ENCODE measurements at regions of chr20 and their contacts with region 1.

Region 1: GRCh38 chr20:24992487-24993205 is at the start of gene APMAP:
- DNase-seq: peak; percentile 77
- H3K4me3 ChIP-seq: peak within 1 kb of the TSS; percentile 87 to 93 (median 90)
- H3K27ac ChIP-seq: peak within 1 kb of the TSS; percentile 92 to 96 (median 96)
- H3K4me1 ChIP-seq: peaks cover 5 to 64% (median 24%) of the 10 kb centered on the region in 3 donors
- H3K27me3 ChIP-seq: no peaks in the 10 kb centered on the region
- CTCF ChIP-seq: peak in 2 of 6 experiments; percentile 9 to 10
- POLR2A ChIP-seq: peak in 3 of 4 donors; percentile 75 to 99 (median 95)
- total RNA-seq, gene APMAP: 16.7 to 38.4 (median 25.6) TPM

Region 2: GRCh38 chr20:24851346-24852019 is 141.2 kb before region 1 on chr20:
- intact Hi-C with region 1: no loop called
- DNase-seq: no peak
- H3K4me3 ChIP-seq: no peak overlapping the region
- H3K27ac ChIP-seq: no peak overlapping the region
- H3K4me1 ChIP-seq: no peaks in the 10 kb centered on the region
- H3K27me3 ChIP-seq: peaks cover 0 to 9% (median 0%) of the 10 kb centered on the region in 4 donors
- CTCF ChIP-seq: no peak
- POLR2A ChIP-seq: no peak

Region 3: DNA sequence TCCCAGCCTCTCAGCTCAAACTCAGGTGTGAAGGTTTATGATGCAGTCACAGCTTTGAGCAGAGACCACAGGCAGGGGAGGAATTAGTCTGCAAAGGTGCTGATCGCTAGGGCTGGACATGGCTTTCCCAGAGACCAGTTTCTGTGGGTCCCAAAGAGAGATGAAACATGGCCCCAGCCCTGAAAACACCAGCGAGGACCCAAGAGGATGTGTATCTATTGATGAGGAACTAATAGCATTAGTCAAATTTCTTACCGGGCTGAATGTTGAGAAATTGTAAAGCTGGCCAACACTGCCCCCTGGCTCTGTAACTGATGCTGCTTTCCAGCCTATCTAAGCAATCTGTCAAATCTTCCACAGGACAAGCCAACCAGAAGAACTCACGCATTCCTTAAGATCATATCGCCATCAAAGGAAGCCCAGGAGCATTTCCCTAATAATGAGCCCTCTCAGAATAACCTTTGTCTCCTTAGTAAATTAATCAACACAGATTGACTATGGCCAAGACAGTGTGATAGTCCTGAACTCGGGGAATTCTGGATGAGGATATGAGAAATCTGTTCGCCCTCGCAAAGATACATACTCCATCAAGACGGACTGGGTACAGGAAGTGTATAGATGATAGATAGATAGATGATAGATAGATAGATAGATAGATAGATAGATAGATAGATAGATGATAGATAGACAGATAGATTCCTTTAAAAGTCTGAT is 73.1 kb after region 1 on chr20:
- intact Hi-C with region 1: loop called (anchors 2 kb)
- DNase-seq: no peak
- H3K4me3 ChIP-seq: no peak overlapping the region
- H3K27ac ChIP-seq: no peak overlapping the region
- H3K4me1 ChIP-seq: peaks cover 0 to 16% (median 0%) of the 10 kb centered on the region in 3 donors
- H3K27me3 ChIP-seq: peaks cover 0 to 40% (median 0%) of the 10 kb centered on the region in 4 donors
- CTCF ChIP-seq: peak; percentile 76 to 88 (median 84)
- POLR2A ChIP-seq: no peak

Region 4: GRCh38 chr20:25178563-25179438 is 186.2 kb after region 1 on chr20:
- intact Hi-C with region 1: loop called (anchors 5 kb)
- DNase-seq: no peak
- H3K4me3 ChIP-seq: no peak overlapping the region
- H3K27ac ChIP-seq: peak overlapping the region in 3 of 4 donors; percentile 8 to 52 (median 47)
- H3K4me1 ChIP-seq: peaks cover 3 to 25% (median 12%) of the 10 kb centered on the region in 3 donors
- H3K27me3 ChIP-seq: no peaks in the 10 kb centered on the region
- CTCF ChIP-seq: peak; percentile 41 to 85 (median 64)
- POLR2A ChIP-seq: no peak

Region 5: DNA sequence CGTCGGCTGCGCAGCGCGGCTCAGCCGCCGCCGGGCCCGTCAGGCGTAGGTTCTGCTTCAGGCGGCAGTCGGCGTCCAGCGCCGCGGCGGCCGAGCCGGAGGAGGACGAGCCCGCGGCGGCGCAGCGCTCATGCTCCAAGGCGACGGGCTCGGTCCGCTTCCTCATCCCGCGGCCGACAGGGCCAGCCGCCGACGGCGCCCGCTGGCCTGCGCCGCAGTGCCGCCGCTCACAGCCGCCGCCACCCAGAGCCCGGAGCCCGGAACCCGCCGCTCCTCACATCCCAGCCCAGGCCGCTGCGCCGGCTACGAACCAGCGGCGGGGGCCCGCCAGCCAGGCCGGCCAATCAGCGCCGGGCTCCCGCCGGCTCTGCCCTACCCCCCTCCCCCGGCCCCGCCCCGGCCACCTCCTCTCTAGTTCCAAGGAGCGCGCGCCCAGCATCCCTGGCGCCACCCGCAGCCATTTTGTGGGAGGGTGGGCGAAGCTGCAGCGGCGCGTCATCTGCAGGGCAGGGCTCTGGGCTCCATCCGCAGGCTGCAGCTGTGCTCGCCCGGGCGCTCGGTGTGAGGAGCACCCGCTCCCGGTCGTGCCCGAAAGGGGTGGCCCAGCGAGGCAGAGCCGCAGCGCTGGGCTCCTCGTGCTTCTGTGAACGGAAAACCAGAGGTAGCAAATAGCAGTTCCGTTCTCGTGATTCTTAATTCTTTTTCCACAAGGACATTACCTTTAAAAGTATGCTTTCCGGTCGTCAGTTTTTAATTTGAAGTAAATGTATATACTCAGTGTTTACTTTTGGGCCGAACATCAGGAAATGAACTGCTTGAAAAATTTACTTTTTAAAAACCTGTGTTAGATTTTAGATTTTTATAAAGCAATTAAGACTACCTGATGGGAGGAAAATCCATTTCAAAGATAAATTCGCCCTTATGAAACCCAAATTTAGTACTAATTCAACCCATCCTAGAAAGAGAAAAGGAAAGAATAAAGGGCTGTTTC is 398.2 kb after region 1 on chr20 and contains the start of gene ABHD12:
- intact Hi-C with region 1: loop called (anchors 10 kb)
- DNase-seq: peak; percentile 63
- H3K4me3 ChIP-seq: peak within 1 kb of the TSS; percentile 78 to 91 (median 81)
- H3K27ac ChIP-seq: peak within 1 kb of the TSS; percentile 86 to 98 (median 92)
- H3K4me1 ChIP-seq: peaks cover 0 to 21% (median 5%) of the 10 kb centered on the region in 3 donors
- H3K27me3 ChIP-seq: no peaks in the 10 kb centered on the region
- CTCF ChIP-seq: no peak
- POLR2A ChIP-seq: peak in 2 of 4 donors; percentile 80 to 91
- total RNA-seq, gene ABHD12: 23.8 to 62.1 (median 36.4) TPM

Measured in esophagus squamous epithelium (tissue), 5 donors.